ENCODE measurements at regions of chr3 and their contacts with region 1.

Region 1: DNA sequence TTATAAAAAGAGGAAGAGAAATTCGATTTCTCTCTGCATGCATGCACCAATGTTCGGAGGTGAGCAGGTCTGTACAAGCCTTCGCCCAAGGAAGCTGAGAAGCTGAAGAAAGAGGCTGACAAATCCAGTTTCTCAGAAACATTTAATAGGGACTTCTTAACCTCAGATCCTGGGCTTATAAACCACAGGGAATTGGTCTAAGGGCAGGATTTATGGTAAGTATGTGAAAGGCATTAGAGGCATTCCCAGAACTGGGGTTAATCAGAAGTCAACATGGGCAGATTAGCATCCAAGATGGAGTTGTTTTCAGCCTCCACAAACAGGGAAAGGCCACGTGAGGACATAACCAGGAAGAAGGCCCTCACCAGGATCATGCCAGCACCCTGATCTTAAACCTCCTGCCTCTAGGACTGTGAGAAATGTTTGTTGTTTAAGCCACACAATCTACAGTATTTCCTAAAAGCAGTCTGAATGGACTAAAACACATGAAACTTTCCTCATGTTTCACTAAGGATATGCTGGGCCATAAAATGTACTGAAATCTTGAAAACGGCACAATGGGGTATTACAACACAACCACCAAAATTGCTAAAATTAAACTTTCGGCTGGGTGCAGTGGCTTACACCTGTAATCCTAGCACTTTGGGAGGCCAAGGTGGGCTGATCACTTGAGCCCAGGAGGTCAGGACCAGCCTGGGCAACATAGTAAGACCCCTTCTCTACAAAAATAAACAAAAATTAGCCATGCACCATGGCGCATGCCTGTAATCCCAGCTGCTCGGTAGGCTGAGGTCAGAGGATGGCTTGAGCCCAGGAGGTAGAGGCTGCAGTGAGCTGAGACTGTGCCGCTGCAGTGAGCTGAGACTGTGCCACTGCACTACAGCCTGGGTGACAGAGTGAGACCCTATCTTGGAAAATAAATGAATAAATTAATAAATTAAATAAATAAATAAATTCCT is 11.2 kb downstream of the SHISA5 start:
- DNase-seq: peak; percentile 77
- H3K4me3 ChIP-seq: peak overlapping the region; percentile 27
- H3K27ac ChIP-seq: peak overlapping the region; percentile 52
- H3K4me1 ChIP-seq: peaks cover 16% of the 10 kb centered on the region
- CTCF ChIP-seq: no peak

Region 2: GRCh38 chr3:48232734-48233133 is 260.1 kb before region 1 on chr3:
- CTCF ChIA-PET with region 1: no interaction called
- POLR2A ChIA-PET with region 1: no interaction called
- intact Hi-C with region 1: no loop called
- DNase-seq: peak; percentile 90
- H3K4me3 ChIP-seq: peak overlapping the region; percentile 60
- H3K27ac ChIP-seq: peak overlapping the region; percentile 30
- H3K4me1 ChIP-seq: peaks cover 54% of the 10 kb centered on the region
- CTCF ChIP-seq: peak; percentile 98

Region 3: GRCh38 chr3:48472915-48473616 is 19.8 kb before region 1 on chr3:
- CTCF ChIA-PET with region 1: interaction called, 3 read pairs
- POLR2A ChIA-PET with region 1: interaction called, 19 read pairs
- intact Hi-C with region 1: loop called (anchors 1 kb)
- DNase-seq: peak; percentile 98
- H3K4me3 ChIP-seq: peak overlapping the region; percentile 76
- H3K27ac ChIP-seq: peak overlapping the region; percentile 84
- H3K4me1 ChIP-seq: peaks cover 48% of the 10 kb centered on the region
- CTCF ChIP-seq: peak; percentile 82

Measured in OCI-LY7 (cell line).